ENCODE measurements at regions of chr2 and their contacts with region 1.

Region 1: DNA sequence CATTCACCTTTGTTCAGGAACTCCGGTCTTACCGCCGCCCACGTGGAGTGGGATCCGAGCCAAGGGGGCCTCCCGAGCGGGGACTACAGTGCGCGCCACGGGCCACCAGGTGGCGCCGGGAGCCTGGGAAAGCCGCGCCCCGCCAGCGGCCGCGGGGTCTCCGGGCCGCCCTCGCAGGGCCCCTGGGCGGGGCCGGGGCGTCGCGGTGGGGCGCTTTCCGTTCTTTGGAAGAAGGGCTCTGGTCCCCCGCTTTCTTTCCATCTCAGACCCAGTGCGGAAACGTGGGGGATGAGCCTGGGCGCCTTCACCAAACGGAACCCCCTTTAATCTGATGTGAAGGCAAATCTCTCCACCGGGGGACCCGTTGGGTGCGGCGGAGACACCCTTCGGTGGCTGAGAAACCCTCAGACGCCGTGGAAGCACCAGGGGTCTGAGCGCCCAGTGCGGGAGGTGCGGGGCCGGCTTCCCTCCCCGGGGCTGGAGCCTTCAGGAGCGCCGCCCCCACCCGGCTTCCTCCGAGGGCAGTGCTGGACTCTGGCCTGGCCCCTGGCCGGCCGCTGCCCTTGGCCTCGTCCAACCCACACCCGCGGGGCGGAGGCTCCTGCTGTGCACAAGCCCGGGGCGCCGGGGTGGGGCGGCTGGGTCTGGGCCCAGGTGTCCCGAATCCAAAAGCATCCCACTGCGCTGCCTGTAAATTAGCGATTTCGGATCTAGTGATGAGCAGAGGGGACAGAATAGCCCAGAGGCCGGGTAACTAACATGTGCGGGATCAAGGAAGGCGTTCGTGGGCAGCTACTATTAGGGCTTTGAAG is 44.6 kb downstream of the GORASP2 start:
- DNase-seq: peak; percentile 87
- H3K4me3 ChIP-seq: peak overlapping the region; percentile 70
- H3K27ac ChIP-seq: no peak overlapping the region
- H3K4me1 ChIP-seq: peaks cover 16% of the 10 kb centered on the region
- CTCF ChIP-seq: peak; percentile 98

Region 2: GRCh38 chr2:170716851-170717598 is 256.7 kb before region 1 on chr2:
- CTCF ChIA-PET with region 1: no interaction called
- POLR2A ChIA-PET with region 1: no interaction called
- intact Hi-C with region 1: no loop called
- DNase-seq: no peak
- H3K4me3 ChIP-seq: no peak overlapping the region
- H3K27ac ChIP-seq: no peak overlapping the region
- H3K4me1 ChIP-seq: no peaks in the 10 kb centered on the region
- CTCF ChIP-seq: no peak

Region 3: DNA sequence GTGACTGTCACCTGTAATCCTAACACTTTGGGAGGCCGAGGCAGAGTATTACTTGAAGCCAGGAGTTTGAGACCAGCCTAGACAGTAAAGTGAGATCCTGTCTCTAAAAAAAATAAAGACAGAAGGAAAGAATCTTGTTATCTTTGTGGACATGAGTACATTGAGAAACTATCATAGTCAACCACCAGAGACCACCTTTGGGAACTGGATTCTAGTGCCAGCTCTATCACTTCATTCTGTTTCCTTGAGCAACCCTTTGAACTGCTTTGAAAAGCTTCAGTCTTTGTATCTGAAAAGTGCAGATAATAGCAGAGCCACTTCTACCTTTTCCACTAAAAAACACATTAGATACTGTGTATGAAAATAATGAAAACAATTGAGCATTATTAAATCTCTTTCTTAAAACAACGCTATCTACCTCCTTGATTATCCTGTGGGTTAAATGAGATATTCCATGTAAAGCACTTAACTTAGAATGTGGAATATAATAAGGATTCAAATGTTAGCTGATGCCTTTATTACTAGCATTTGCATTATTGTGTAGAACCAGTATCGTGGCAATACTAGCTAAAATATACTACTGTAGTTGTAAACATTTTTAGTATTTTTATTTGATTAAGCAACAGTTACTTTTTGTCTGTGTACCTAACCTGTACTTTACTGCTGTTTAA is 35.9 kb before region 1 on chr2:
- CTCF ChIA-PET with region 1: no interaction called
- POLR2A ChIA-PET with region 1: no interaction called
- intact Hi-C with region 1: no loop called
- DNase-seq: no peak
- H3K4me3 ChIP-seq: no peak overlapping the region
- H3K27ac ChIP-seq: no peak overlapping the region
- H3K4me1 ChIP-seq: peaks cover 17% of the 10 kb centered on the region
- CTCF ChIP-seq: no peak

Region 4: DNA sequence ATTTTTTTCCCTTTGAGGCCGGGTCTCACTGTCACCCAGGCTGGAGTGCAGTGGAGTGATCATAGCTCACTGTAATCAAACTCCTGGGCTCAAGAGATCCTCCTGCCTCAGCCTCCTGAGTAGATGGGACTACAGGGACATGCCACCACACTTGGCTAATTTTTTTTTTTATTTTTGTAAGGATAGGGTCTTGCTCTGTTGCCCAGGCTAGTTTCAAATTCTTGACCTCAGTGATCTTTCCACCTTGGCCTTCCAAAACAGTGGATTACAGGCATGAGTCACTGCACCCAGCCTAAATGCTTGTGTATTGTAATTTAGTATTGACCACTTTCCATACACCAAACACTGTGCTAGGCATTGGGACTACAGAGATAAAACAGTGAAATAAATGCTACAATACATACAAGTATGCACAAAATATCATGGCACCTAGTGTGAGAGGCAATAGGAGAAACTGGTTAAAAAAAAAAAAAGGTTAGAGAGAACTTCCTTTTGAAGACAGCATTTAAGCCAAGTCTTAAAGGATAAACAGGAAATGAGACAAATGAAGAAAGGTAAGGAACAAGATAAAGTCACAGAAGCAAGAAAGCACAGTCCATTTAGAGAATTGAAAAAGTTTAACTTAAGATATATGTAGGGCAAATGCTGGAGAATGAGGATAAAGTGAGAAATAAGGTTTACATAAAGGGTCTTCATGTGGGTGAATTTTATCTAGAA is 68.7 kb after region 1 on chr2:
- CTCF ChIA-PET with region 1: no interaction called
- POLR2A ChIA-PET with region 1: no interaction called
- intact Hi-C with region 1: no loop called
- DNase-seq: peak; percentile 25
- H3K4me3 ChIP-seq: no peak overlapping the region
- H3K27ac ChIP-seq: peak overlapping the region; percentile 22
- H3K4me1 ChIP-seq: peaks cover 15% of the 10 kb centered on the region
- CTCF ChIP-seq: no peak

Region 5: GRCh38 chr2:171529914-171530313 is 556.2 kb after region 1 on chr2:
- CTCF ChIA-PET with region 1: no interaction called
- POLR2A ChIA-PET with region 1: no interaction called
- intact Hi-C with region 1: loop called (anchors 5 kb)
- DNase-seq: peak; percentile 22
- H3K4me3 ChIP-seq: no peak overlapping the region
- H3K27ac ChIP-seq: no peak overlapping the region
- H3K4me1 ChIP-seq: no peaks in the 10 kb centered on the region
- CTCF ChIP-seq: peak; percentile 84